A673 (cell line): ENCODE measurements at regions of chr22 and their contacts with region 1.

Region 1: DNA sequence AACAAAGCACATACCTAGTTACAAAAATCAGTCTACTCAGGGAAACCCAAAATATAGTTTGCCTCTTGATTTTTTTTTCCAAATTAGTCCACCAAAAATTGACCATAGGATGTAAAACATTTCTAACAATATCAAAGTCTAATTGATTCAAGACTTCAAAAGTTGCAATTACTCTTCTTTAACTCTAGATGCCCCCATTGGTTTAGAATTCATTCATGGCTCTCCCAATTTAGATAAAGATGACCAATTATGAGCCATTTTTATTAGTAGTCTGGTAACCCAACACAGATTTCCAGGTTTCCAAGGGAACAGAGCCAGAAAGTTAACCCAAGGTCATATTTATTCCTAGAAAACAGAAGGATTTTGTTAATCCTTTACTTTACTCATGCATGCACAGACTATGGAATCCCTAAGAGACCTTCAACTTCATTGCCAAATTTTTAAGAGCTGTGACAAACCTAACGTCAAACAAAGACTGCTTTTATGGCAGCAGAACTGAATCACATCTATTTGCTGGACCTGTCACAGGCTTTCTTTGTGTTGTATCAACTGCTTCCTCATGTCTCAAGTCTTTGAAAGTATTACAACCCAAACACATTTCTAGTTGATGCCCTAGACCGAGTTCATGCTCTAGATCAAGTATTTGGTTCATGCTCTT is 55.3 kb downstream of the C22orf42 start:
- DNase-seq: peak; percentile 12
- H3K4me3 ChIP-seq: no peak overlapping the region
- H3K27ac ChIP-seq: no peak overlapping the region
- H3K4me1 ChIP-seq: no peaks in the 10 kb centered on the region
- H3K27me3 ChIP-seq: peaks cover 32% of the 10 kb centered on the region
- CTCF ChIP-seq: peak; percentile 47

Region 2: DNA sequence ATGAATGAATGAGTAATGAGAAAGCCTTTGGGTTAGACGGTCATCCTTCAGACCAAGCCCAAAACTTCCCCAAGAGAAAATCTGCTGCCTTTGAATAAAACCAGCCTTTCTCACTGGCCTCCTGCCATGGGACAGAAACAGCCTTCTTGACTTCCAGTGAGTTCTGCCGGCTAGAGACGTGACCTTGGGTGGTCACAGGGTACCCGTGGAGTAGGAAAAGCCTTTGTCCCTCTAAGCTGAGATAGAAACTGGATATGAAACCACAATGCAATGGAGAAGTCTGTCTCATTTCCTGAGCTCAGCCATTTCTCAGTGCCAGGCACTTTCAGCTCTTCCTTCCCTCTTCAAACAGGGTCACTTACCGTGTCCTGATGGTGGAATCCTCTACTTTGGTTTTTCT is 180.7 kb before region 1 on chr22:
- CTCF ChIA-PET with region 1: no interaction called
- POLR2A ChIA-PET with region 1: no interaction called
- intact Hi-C with region 1: no loop called
- DNase-seq: no peak
- H3K4me3 ChIP-seq: no peak overlapping the region
- H3K27ac ChIP-seq: no peak overlapping the region
- H3K4me1 ChIP-seq: no peaks in the 10 kb centered on the region
- H3K27me3 ChIP-seq: peaks cover 5% of the 10 kb centered on the region
- CTCF ChIP-seq: no peak

Region 3: GRCh38 chr22:32058656-32059260 is 45.0 kb before region 1 on chr22:
- CTCF ChIA-PET with region 1: no interaction called
- POLR2A ChIA-PET with region 1: no interaction called
- intact Hi-C with region 1: no loop called
- DNase-seq: no peak
- H3K4me3 ChIP-seq: no peak overlapping the region
- H3K27ac ChIP-seq: no peak overlapping the region
- H3K4me1 ChIP-seq: no peaks in the 10 kb centered on the region
- H3K27me3 ChIP-seq: no peaks in the 10 kb centered on the region
- CTCF ChIP-seq: no peak

Region 4: GRCh38 chr22:32158712-32159533 is 55.1 kb after region 1 on chr22 and contains the start of gene C22orf42:
- CTCF ChIA-PET with region 1: no interaction called
- POLR2A ChIA-PET with region 1: no interaction called
- intact Hi-C with region 1: no loop called
- DNase-seq: no peak
- H3K4me3 ChIP-seq: no peak within 1 kb of the TSS
- H3K27ac ChIP-seq: no peak within 1 kb of the TSS
- H3K4me1 ChIP-seq: no peaks in the 10 kb centered on the region
- H3K27me3 ChIP-seq: peaks cover 39% of the 10 kb centered on the region
- CTCF ChIP-seq: no peak
- total RNA-seq, gene C22orf42: not detected in 2 replicates

Region 5: GRCh38 chr22:32265882-32266767 is 162.3 kb after region 1 on chr22:
- CTCF ChIA-PET with region 1: interaction called, 4 read pairs
- POLR2A ChIA-PET with region 1: no interaction called
- intact Hi-C with region 1: loop called (anchors 10 kb)
- DNase-seq: peak; percentile 87
- H3K4me3 ChIP-seq: no peak overlapping the region
- H3K27ac ChIP-seq: no peak overlapping the region
- H3K4me1 ChIP-seq: no peaks in the 10 kb centered on the region
- H3K27me3 ChIP-seq: no peaks in the 10 kb centered on the region
- CTCF ChIP-seq: peak; percentile 92

Region 6: DNA sequence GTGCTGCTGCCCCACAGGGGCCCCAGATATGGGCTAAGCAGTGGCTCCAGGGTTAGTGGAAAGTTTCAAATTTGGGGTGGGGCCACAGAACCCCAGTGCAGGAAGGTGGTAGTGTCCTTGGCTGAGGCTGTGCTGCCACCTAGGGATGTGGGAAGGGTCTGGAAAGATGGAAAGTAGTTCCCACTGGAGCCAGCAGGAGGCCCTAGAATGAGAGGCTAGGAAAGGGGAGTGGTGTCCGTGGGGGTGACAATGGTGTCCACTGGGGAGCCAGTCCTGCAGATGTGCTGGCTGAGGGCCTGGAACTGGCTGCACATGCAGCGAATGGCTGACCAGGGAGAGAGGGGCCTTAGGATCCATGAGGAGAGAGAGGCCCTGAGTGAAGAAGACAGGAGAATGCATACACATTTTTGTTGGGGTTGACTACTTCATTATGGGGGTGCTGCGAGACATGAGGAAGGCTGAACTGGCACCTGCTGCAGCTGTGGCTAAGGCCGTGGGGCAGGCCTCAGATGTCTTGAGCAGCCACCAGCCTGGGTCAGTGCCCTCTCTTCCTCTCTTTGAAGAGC is 275.0 kb after region 1 on chr22:
- CTCF ChIA-PET with region 1: no interaction called
- POLR2A ChIA-PET with region 1: no interaction called
- intact Hi-C with region 1: loop called (anchors 2 kb)
- DNase-seq: peak; percentile 75
- H3K4me3 ChIP-seq: no peak overlapping the region
- H3K27ac ChIP-seq: no peak overlapping the region
- H3K4me1 ChIP-seq: no peaks in the 10 kb centered on the region
- H3K27me3 ChIP-seq: no peaks in the 10 kb centered on the region
- CTCF ChIP-seq: peak; percentile 93

Region 7: DNA sequence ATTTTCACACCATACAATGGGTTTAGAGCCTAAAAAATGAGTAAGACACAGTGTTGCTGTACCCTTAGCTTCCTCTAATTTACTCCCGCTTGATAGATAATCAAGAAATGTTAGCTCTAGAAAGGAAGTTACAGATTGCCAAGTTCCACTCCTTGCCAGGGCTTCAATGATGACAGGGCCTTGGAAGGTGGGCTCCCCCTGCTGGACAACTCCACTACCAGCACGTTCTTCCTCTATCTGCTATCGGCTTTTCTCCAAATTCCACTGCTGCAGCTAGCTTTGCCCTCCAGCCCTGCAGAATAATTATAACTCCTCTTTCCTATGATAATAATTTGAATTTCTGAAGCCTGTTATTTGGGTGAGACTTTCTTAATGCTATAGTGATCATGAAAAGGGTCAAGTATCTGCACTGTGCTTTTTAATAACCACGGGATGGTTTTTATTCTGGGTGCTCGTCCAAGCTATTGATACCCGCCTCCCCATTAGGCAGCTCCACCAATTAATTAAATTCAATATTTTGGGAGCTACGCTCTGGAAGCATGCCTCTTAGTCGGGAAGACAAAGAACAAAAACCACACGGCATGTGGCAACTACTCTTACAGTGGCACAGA is 945.4 kb after region 1 on chr22:
- CTCF ChIA-PET with region 1: no interaction called
- POLR2A ChIA-PET with region 1: no interaction called
- intact Hi-C with region 1: loop called (anchors 5 kb)
- DNase-seq: peak; percentile 72
- H3K4me3 ChIP-seq: no peak overlapping the region
- H3K27ac ChIP-seq: no peak overlapping the region
- H3K4me1 ChIP-seq: no peaks in the 10 kb centered on the region
- H3K27me3 ChIP-seq: peaks cover 9% of the 10 kb centered on the region
- CTCF ChIP-seq: peak; percentile 88